Activated B cell treated with CpG ODN at 0.5 μM for 24 hours (primary cell): ENCODE measurements at regions of chr9 and their contacts with region 1.

Region 1: GRCh38 chr9:87834357-87834756 is 48.3 kb upstream of the SPATA31E1 start:
- DNase-seq: no peak
- ATAC-seq: no peak
- H3K4me3 Mint-ChIP-seq: no peak overlapping the region
- H3K27ac Mint-ChIP-seq: no peak overlapping the region
- H3K4me1 Mint-ChIP-seq: no peaks in the 10 kb centered on the region
- H3K27me3 Mint-ChIP-seq: no peaks in the 10 kb centered on the region
- CTCF ChIP-seq: no peak

Region 2: GRCh38 chr9:86217076-86217755 is 1617.1 kb before region 1 on chr9:
- CTCF ChIA-PET with region 1: no interaction called
- POLR2A ChIA-PET with region 1: interaction called, 11 read pairs
- intact Hi-C with region 1: no loop called
- DNase-seq: no peak
- ATAC-seq: no peak
- H3K4me3 Mint-ChIP-seq: no peak overlapping the region
- H3K27ac Mint-ChIP-seq: no peak overlapping the region
- H3K4me1 Mint-ChIP-seq: no peaks in the 10 kb centered on the region
- H3K27me3 Mint-ChIP-seq: peaks cover 2% of the 10 kb centered on the region
- CTCF ChIP-seq: no peak